Posterior vena cava (tissue), 2 donors: ENCODE measurements at regions of chr7 and their contacts with region 1.

Region 1: DNA sequence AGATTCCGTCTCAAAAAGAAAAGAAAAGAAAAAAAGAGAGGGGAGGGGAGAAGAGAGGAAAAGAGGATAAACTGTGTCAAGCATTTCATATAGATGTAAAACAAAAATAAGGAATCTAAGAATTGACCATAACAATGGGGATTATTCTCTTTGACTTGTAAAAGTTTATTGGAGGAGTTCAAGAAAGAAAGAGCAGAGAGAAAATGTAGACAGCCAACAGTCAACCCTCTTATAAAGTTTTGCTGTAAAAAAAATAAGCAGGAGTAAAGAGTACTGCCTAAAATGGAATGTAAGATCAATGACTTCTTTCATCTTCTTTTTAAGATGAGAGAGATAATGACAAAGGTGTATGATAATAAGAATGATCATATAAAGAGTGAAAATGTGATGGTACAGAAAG is 87.9 kb downstream of the SNX13 start:
- DNase-seq: no peak

Region 2: GRCh38 chr7:17815318-17815717 is 37.0 kb before region 1 on chr7:
- intact Hi-C with region 1: loop called in 1 of 2 experiments (anchors 2 kb)
- DNase-seq: peak; percentile 48

Region 3: DNA sequence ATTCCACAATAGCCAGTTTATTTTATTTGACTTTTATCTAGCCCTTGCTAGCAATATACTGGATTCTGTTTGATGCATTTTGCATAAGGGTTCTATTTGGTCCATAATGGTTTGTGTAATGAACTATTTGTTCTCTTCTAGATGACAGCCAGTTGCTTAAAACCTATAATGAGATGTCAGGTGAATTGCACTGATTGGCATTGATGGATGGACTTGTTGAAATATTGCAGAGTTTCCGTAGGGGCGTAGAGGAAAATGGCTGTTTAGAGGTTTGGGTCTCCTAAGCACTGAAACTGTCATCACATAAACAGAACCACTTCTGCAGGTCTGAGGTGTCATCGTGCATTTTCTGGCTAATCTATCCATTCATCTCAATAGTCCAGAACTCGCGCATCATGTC is 518.3 kb after region 1 on chr7:
- intact Hi-C with region 1: no loop called
- DNase-seq: no peak